ENCODE measurements at regions of chr2 and their contacts with region 1.

Region 1: GRCh38 chr2:227890495-227891079 is 19.2 kb downstream of the DAW1 start:
- DNase-seq: no peak
- H3K4me3 Mint-ChIP-seq: no peak overlapping the region
- H3K27ac Mint-ChIP-seq: no peak overlapping the region
- H3K4me1 Mint-ChIP-seq: no peaks in the 10 kb centered on the region
- H3K27me3 Mint-ChIP-seq: no peaks in the 10 kb centered on the region

Region 2: GRCh38 chr2:227903381-227903780 is 12.8 kb after region 1 on chr2:
- CTCF ChIA-PET with region 1: interaction called, 12 read pairs
- POLR2A ChIA-PET with region 1: no interaction called
- intact Hi-C with region 1: no loop called
- DNase-seq: no peak
- H3K4me3 Mint-ChIP-seq: no peak overlapping the region
- H3K27ac Mint-ChIP-seq: no peak overlapping the region
- H3K4me1 Mint-ChIP-seq: no peaks in the 10 kb centered on the region
- H3K27me3 Mint-ChIP-seq: peaks cover 2% of the 10 kb centered on the region

Region 3: DNA sequence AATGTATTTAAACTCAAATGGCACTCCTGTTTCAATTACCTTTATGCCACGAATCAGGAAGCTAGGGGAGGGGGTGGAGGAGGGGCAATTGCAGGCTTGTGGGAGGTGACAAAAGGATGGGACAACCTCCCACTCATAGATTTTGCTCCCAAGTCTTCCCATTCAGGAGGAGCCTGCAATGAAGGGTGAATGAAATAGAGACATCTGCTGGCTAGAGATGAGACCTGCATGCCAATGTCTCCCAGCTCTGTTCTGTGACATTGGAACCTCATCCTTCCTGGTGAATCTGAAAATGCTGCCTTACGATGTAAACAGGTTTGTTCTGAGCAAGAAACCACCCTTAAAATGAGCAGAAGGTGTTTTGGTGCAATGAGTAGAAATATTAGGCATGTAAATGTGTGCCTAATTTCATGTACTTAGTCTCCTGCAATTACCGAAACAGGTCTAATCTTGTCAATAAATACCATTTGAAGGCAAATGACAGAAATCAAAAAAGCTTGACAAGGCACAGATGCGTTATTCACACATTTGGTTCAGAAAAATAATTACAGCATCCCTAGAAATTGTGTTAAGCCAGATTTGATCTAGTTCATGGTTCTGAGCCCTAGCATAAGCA is 1383.2 kb after region 1 on chr2:
- CTCF ChIA-PET with region 1: interaction called, 21 read pairs
- POLR2A ChIA-PET with region 1: no interaction called
- intact Hi-C with region 1: no loop called
- DNase-seq: no peak
- H3K4me3 Mint-ChIP-seq: no peak overlapping the region
- H3K27ac Mint-ChIP-seq: no peak overlapping the region
- H3K4me1 Mint-ChIP-seq: peaks cover 3% of the 10 kb centered on the region
- H3K27me3 Mint-ChIP-seq: peaks cover 22% of the 10 kb centered on the region

Region 4: GRCh38 chr2:229586746-229587705 is 1696.4 kb after region 1 on chr2:
- CTCF ChIA-PET with region 1: interaction called, 16 read pairs
- POLR2A ChIA-PET with region 1: no interaction called
- intact Hi-C with region 1: loop called (anchors 5 kb)
- DNase-seq: peak; percentile 43
- H3K4me3 Mint-ChIP-seq: no peak overlapping the region
- H3K27ac Mint-ChIP-seq: no peak overlapping the region
- H3K4me1 Mint-ChIP-seq: no peaks in the 10 kb centered on the region
- H3K27me3 Mint-ChIP-seq: peaks cover 20% of the 10 kb centered on the region

Region 5: GRCh38 chr2:229714736-229715541 is 1824.4 kb after region 1 on chr2:
- CTCF ChIA-PET with region 1: interaction called, 7 read pairs
- POLR2A ChIA-PET with region 1: no interaction called
- intact Hi-C with region 1: loop called (anchors 10 kb)
- DNase-seq: peak; percentile 61
- H3K4me3 Mint-ChIP-seq: peak overlapping the region; percentile 43
- H3K27ac Mint-ChIP-seq: no peak overlapping the region
- H3K4me1 Mint-ChIP-seq: peaks cover 13% of the 10 kb centered on the region
- H3K27me3 Mint-ChIP-seq: peaks cover 58% of the 10 kb centered on the region

Measured in activated CD4-positive, alpha-beta memory T cell treated with anti-CD3 and anti-CD28 coated beads for 36 hours (primary cell).